ENCODE measurements at regions of chr12 and their contacts with region 1.

Region 1: DNA sequence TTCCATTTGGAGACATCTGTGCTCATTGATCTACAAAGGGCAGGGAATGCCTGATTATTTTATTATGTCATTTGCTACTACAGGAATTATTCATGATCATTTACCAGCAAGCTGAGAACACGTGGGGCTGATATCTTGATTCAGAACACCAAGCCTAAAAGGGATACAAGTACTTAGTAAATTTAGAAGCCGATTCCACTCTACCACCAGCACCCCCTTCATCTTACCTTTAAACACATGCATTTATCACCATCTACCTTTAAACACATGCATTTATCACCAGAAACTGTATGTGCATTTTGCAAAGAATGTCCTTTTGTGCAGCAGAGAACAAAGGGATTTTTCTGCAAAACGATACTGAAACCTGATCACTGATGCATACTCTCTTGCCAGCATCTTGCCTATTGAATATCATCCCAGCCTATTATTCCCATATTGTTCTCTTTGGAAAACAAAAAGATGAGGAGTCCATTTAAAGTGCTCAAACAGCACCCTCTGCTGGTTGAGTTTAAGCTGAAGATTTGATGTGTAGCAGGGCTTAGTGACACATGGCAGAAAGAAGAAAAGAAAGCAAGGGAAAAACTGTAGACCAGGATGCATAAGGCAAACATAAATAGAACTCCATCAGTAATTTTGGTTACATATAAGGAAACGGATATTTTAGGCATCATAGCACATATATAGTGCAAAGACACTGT is 132.6 kb upstream of the PLEKHG7 start:
- DNase-seq: peak; percentile 36
- H3K4me3 Mint-ChIP-seq: no peak overlapping the region
- H3K27ac Mint-ChIP-seq: no peak overlapping the region
- H3K4me1 Mint-ChIP-seq: peaks cover 49% of the 10 kb centered on the region
- H3K27me3 Mint-ChIP-seq: no peaks in the 10 kb centered on the region

Region 2: GRCh38 chr12:91361864-91362263 is 1208.3 kb before region 1 on chr12:
- intact Hi-C with region 1: loop called (anchors 5 kb)
- DNase-seq: no peak
- H3K4me3 Mint-ChIP-seq: no peak overlapping the region
- H3K27ac Mint-ChIP-seq: no peak overlapping the region
- H3K4me1 Mint-ChIP-seq: peaks cover 5% of the 10 kb centered on the region
- H3K27me3 Mint-ChIP-seq: peaks cover 9% of the 10 kb centered on the region

Region 3: DNA sequence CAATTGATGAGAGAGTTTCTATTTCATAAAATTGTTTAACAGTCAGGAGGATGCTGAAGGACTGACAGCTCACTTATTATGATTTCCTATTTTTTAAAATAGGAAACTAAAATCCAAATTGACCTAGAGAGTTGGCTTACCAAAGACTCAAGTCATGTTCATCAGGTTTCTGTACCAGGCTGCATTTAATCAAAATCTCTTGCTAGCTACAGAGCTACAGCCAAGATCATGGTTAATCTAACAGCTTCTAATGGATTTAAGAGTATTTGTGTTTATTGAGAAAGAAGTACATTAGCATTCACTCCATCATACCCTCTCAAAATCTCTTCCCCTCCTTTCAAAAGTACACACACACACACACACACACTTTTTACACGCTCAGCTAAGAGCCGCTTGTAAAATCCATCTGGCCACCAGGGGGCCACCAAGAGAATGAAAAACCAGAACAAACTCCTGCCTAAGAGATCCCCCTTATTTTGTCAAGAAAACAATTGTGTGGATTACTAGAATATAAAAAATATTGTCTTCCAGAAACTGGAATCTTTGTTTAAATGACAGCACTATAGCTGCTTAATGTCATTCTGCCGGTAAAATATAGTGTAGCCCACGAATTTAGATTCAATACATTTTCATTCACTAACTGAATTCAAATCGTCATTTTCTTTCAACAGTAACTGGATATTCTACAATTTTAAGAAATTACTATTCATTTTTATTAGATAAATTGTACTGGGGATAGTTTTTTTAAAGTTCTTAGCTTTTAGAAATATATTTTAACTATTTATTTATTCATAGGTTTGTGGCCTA is 758.5 kb before region 1 on chr12:
- intact Hi-C with region 1: loop called (anchors 1 kb)
- DNase-seq: peak; percentile 35
- H3K4me3 Mint-ChIP-seq: no peak overlapping the region
- H3K27ac Mint-ChIP-seq: no peak overlapping the region
- H3K4me1 Mint-ChIP-seq: peaks cover 10% of the 10 kb centered on the region
- H3K27me3 Mint-ChIP-seq: no peaks in the 10 kb centered on the region

Region 4: DNA sequence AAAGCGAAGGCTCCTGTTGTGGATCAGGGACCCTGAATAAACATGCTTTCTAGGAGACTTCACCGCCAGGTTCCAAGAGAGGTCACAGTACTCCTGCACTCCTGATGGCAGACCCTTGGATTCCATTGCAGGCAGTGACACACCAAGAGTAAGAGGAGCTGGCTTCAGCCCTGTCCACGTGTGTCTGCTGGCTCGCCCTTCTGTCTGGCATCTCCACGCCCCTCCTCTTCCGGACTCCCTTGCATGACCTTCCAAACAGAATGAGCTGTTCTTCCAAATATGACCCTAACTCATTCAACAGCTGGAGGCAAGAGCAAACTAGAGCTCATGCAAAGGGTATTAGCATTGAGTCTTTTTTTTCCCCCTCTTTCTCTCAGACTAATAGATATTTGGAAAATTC is 100.4 kb before region 1 on chr12:
- intact Hi-C with region 1: loop called (anchors 1 kb)
- DNase-seq: no peak
- H3K4me3 Mint-ChIP-seq: no peak overlapping the region
- H3K27ac Mint-ChIP-seq: peak overlapping the region; percentile 81
- H3K4me1 Mint-ChIP-seq: peaks cover 30% of the 10 kb centered on the region
- H3K27me3 Mint-ChIP-seq: no peaks in the 10 kb centered on the region

Region 5: DNA sequence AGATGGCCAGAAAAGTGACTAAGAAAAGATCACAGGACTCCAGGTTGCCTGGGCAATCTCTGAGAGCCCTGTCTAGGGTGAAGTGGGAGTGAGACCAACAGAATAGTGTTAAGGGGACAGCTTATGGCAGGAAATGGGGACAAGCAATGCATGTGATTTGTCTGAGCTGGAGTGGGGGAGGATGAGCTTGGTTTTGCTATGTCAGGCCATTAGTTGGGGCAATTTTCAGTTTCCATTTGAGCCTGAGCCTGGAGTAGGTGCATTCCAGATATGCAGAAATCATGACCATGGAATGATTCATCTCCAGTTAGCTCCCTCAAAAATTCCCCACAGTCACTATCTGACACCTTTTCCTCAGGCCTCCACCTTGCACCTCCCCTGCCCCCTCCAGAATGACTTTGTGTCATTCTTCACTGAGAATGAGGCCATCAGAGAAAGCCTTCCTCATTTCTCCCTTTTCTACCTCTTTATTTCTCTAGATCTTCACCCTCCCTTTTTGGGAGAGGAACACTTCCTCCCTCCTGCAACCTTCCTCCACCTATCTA is 18.3 kb before region 1 on chr12:
- intact Hi-C with region 1: loop called (anchors 1 kb)
- DNase-seq: no peak
- H3K4me3 Mint-ChIP-seq: no peak overlapping the region
- H3K27ac Mint-ChIP-seq: no peak overlapping the region
- H3K4me1 Mint-ChIP-seq: peaks cover 31% of the 10 kb centered on the region
- H3K27me3 Mint-ChIP-seq: no peaks in the 10 kb centered on the region

Region 6: GRCh38 chr12:92649511-92650227 is 79.5 kb after region 1 on chr12:
- intact Hi-C with region 1: loop called (anchors 1 kb)
- DNase-seq: peak; percentile 40
- H3K4me3 Mint-ChIP-seq: no peak overlapping the region
- H3K27ac Mint-ChIP-seq: no peak overlapping the region
- H3K4me1 Mint-ChIP-seq: peaks cover 10% of the 10 kb centered on the region
- H3K27me3 Mint-ChIP-seq: no peaks in the 10 kb centered on the region